T-cell (primary cell): ENCODE measurements at regions of chr10 and their contacts with region 1.

Region 1: DNA sequence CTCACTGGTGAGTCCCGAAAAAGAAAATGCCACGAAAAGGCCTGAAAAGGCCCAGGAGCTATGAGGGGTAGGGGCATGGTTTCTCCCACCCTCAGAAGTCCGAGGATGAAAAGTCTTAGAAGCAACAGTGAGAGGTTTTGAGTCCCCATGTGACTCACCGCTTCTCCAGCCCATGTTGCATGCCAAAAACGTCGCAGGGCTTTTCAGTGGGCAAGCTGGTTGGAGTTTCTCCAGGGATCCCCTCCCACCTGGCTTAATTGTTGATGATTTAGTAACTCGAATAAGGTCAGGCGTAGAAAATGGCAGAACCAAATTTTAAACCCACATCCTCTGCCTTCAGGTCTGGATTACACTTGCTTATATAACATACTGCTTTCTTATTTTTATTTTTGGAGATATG is 96.3 kb upstream of the ARMC3 start:
- DNase-seq: no peak
- ATAC-seq: no peak
- H3K4me3 ChIP-seq: no peak overlapping the region
- H3K4me3 Mint-ChIP-seq: no peak overlapping the region
- H3K27ac ChIP-seq: no peak overlapping the region
- H3K27ac Mint-ChIP-seq: no peak overlapping the region
- H3K4me1 ChIP-seq: no peaks in the 10 kb centered on the region
- H3K4me1 Mint-ChIP-seq: no peaks in the 10 kb centered on the region
- H3K27me3 ChIP-seq: peaks cover 0 to 3% of the 10 kb centered on the region in 2 experiments
- H3K27me3 Mint-ChIP-seq: peaks cover 0 to 4% of the 10 kb centered on the region in 2 donors

Region 2: GRCh38 chr10:22911889-22912762 is 80.5 kb after region 1 on chr10:
- CTCF ChIA-PET with region 1: no interaction called
- POLR2A ChIA-PET with region 1: interaction called in 1 of 2 experiments, 10 read pairs
- DNase-seq: no peak
- ATAC-seq: no peak
- H3K4me3 ChIP-seq: no peak overlapping the region
- H3K4me3 Mint-ChIP-seq: no peak overlapping the region
- H3K27ac ChIP-seq: no peak overlapping the region
- H3K27ac Mint-ChIP-seq: no peak overlapping the region
- H3K4me1 ChIP-seq: no peaks in the 10 kb centered on the region
- H3K4me1 Mint-ChIP-seq: peaks cover 3 to 8% (median 7%) of the 10 kb centered on the region in 3 donors
- H3K27me3 ChIP-seq: no peaks in the 10 kb centered on the region
- H3K27me3 Mint-ChIP-seq: no peaks in the 10 kb centered on the region